OCI-LY7 (cell line): ENCODE measurements at regions of chr4 and their contacts with region 1.

Region 1: GRCh38 chr4:73311428-73311827 is 52.8 kb upstream of the ANKRD17 start:
- DNase-seq: peak; percentile 48
- H3K4me3 ChIP-seq: no peak overlapping the region
- H3K27ac ChIP-seq: no peak overlapping the region
- H3K4me1 ChIP-seq: peaks cover 3% of the 10 kb centered on the region
- CTCF ChIP-seq: peak; percentile 85

Region 2: GRCh38 chr4:73446336-73446938 is 135.0 kb after region 1 on chr4:
- CTCF ChIA-PET with region 1: no interaction called
- POLR2A ChIA-PET with region 1: no interaction called
- intact Hi-C with region 1: loop called (anchors 10 kb)
- DNase-seq: peak; percentile 78
- H3K4me3 ChIP-seq: no peak overlapping the region
- H3K27ac ChIP-seq: no peak overlapping the region
- H3K4me1 ChIP-seq: no peaks in the 10 kb centered on the region
- CTCF ChIP-seq: peak; percentile 99

Region 3: GRCh38 chr4:73573794-73574406 is 262.5 kb after region 1 on chr4:
- CTCF ChIA-PET with region 1: no interaction called
- POLR2A ChIA-PET with region 1: no interaction called
- intact Hi-C with region 1: loop called (anchors 5 kb)
- DNase-seq: peak; percentile 86
- H3K4me3 ChIP-seq: no peak overlapping the region
- H3K27ac ChIP-seq: peak overlapping the region; percentile 54
- H3K4me1 ChIP-seq: peaks cover 20% of the 10 kb centered on the region
- CTCF ChIP-seq: peak; percentile 99

Region 4: GRCh38 chr4:73668782-73669201 is 357.4 kb after region 1 on chr4:
- CTCF ChIA-PET with region 1: interaction called, 3 read pairs
- POLR2A ChIA-PET with region 1: no interaction called
- intact Hi-C with region 1: loop called (anchors 5 kb)
- DNase-seq: no peak
- H3K4me3 ChIP-seq: no peak overlapping the region
- H3K27ac ChIP-seq: no peak overlapping the region
- H3K4me1 ChIP-seq: no peaks in the 10 kb centered on the region
- CTCF ChIP-seq: no peak

Region 5: GRCh38 chr4:74133786-74134499 is 822.5 kb after region 1 on chr4:
- CTCF ChIA-PET with region 1: no interaction called
- POLR2A ChIA-PET with region 1: no interaction called
- intact Hi-C with region 1: loop called (anchors 5 kb)
- DNase-seq: peak; percentile 63
- H3K4me3 ChIP-seq: no peak overlapping the region
- H3K27ac ChIP-seq: no peak overlapping the region
- H3K4me1 ChIP-seq: no peaks in the 10 kb centered on the region
- CTCF ChIP-seq: peak; percentile 90